CD4-positive, alpha-beta memory T cell (primary cell): ENCODE measurements at regions of chr2 and their contacts with region 1.

Region 1: GRCh38 chr2:105744091-105744908 is 412 bp upstream of the NCK2 start:
- DNase-seq: peak; percentile 63 to 71 (median 69)
- H3K4me3 ChIP-seq: peak overlapping the region; percentile 36 to 38
- H3K4me3 Mint-ChIP-seq: peak overlapping the region; percentile 84 to 91 (median 88)
- H3K27ac ChIP-seq: peak overlapping the region; percentile 65
- H3K27ac Mint-ChIP-seq: peak overlapping the region; percentile 87 to 94 (median 93)
- H3K4me1 ChIP-seq: peaks cover 75% of the 10 kb centered on the region
- H3K4me1 Mint-ChIP-seq: peaks cover 60 to 89% (median 73%) of the 10 kb centered on the region in 4 donors
- H3K27me3 ChIP-seq: no peaks in the 10 kb centered on the region
- H3K27me3 Mint-ChIP-seq: no peaks in the 10 kb centered on the region

Region 2: DNA sequence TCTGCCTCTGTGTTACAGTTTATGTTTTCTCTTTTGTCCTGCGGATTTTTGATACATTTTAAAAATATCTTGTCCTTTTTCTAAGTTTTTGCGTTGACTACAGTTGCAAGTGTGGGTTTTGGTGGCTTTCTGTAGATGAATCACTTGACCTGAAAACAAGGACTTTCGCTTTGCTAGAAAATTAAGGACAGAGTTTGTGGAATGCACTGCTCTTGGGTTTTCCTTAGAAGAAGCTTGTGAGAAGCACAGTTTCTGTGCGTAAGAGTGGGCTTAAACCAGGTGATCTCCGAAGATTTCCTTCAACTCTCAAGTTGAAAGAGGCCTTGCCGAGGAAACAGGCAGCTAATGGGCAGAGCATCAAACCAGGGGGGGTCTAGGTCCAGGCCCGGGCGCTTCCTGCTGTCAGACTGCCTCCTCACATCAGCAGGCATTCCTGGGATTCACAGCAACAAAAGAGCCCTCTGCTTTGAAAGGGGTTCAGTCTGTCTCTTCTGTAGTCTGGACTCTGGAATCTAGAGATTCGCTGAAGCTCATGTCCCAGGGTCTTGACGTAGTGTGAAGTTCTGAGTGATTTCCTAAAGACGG is 17.7 kb after region 1 on chr2:
- CTCF ChIA-PET with region 1: interaction called, 8 read pairs
- POLR2A ChIA-PET with region 1: interaction called, 88 read pairs
- intact Hi-C with region 1: loop called (anchors 2 kb)
- DNase-seq: no peak
- H3K4me3 ChIP-seq: peak overlapping the region; percentile 9 to 39
- H3K4me3 Mint-ChIP-seq: peak overlapping the region; percentile 26 to 87 (median 71)
- H3K27ac ChIP-seq: peak overlapping the region; percentile 53
- H3K27ac Mint-ChIP-seq: peak overlapping the region; percentile 61 to 93 (median 84)
- H3K4me1 ChIP-seq: peaks cover 100% of the 10 kb centered on the region
- H3K4me1 Mint-ChIP-seq: peaks cover 79 to 100% (median 91%) of the 10 kb centered on the region in 4 donors
- H3K27me3 ChIP-seq: no peaks in the 10 kb centered on the region
- H3K27me3 Mint-ChIP-seq: no peaks in the 10 kb centered on the region

Region 3: DNA sequence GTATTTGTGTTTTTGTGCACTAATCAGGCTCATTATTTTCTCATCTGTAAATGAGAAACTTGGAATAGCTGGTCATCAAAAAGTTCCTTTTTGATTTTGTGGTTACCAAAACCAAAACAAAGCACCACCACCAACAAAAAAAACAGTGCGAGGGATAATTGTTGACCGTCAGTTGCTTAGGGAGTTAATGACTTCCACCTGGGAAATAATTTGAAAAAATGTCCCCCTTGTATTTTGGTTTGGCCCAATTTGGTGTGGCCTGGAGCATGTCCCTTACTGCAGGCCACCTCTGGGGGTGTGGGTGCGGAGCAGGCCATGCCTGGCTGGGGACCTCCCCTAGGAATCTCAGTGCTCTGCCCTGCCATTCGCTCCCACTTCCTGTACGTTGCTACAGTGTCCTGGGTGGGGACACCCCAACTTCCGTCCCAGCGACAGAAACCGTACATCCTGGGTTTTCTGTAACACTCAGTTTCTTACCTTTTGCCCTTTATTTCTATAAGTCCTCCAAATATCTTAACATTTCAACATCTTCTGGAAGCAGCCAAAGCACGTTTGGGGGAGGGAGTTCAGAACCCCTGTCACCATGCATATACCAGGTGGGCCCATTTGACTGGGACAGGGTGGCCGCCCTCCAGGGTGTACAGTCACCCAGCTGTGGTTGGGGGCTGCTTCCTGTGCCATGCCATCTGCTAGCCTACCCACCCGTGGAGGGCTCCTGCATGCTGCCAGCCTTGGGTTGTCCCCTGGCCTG is 31.7 kb after region 1 on chr2:
- CTCF ChIA-PET with region 1: interaction called, 14 read pairs
- POLR2A ChIA-PET with region 1: interaction called, 82 read pairs
- intact Hi-C with region 1: loop called (anchors 2 kb)
- DNase-seq: peak in 3 of 5 donors; percentile 48 to 66 (median 48)
- H3K4me3 ChIP-seq: peak overlapping the region; percentile 3 to 55
- H3K4me3 Mint-ChIP-seq: peak overlapping the region; percentile 73 to 90 (median 82)
- H3K27ac ChIP-seq: peak overlapping the region; percentile 71
- H3K27ac Mint-ChIP-seq: peak overlapping the region; percentile 91 to 98 (median 97)
- H3K4me1 ChIP-seq: peaks cover 100% of the 10 kb centered on the region
- H3K4me1 Mint-ChIP-seq: peaks cover 76 to 98% (median 91%) of the 10 kb centered on the region in 4 donors
- H3K27me3 ChIP-seq: no peaks in the 10 kb centered on the region
- H3K27me3 Mint-ChIP-seq: no peaks in the 10 kb centered on the region

Region 4: DNA sequence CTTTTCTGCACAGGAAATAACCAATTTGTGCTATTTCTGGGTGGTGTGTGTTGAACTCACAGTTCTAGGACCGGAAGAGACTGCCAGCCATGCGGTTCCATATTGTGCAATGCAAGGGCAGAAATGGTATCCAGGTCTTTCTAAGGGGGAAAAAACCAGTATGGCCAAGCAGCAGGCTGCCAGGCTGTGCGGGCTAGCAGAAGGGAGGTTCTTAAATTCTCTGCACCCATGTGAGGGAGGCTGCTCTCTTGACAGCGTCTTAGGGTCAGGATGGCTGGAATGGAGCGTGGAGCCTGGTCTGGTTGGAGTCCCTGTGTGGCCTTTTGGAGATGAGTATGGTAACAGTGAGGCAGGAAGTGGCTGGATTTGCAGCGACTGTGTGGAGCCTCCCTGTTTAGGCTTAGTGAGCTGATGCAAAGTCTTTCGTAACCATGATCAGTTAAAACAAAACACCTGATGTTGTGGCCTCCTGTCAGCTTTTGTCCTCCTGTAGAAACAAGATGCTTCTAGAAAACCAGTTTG is 53.1 kb after region 1 on chr2:
- CTCF ChIA-PET with region 1: interaction called, 5 read pairs
- POLR2A ChIA-PET with region 1: interaction called, 47 read pairs
- intact Hi-C with region 1: loop called (anchors 2 kb)
- DNase-seq: peak in 4 of 5 donors; percentile 53 to 67 (median 58)
- H3K4me3 ChIP-seq: peak overlapping the region; percentile 1 to 33
- H3K4me3 Mint-ChIP-seq: peak overlapping the region; percentile 74 to 88 (median 82)
- H3K27ac ChIP-seq: peak overlapping the region; percentile 74
- H3K27ac Mint-ChIP-seq: peak overlapping the region; percentile 86 to 98 (median 95)
- H3K4me1 ChIP-seq: peaks cover 99% of the 10 kb centered on the region
- H3K4me1 Mint-ChIP-seq: peaks cover 82 to 95% (median 88%) of the 10 kb centered on the region in 4 donors
- H3K27me3 ChIP-seq: no peaks in the 10 kb centered on the region
- H3K27me3 Mint-ChIP-seq: no peaks in the 10 kb centered on the region

Region 5: GRCh38 chr2:105873721-105874120 is 129.4 kb after region 1 on chr2:
- CTCF ChIA-PET with region 1: no interaction called
- POLR2A ChIA-PET with region 1: no interaction called
- intact Hi-C with region 1: loop called (anchors 5 kb)
- DNase-seq: peak in 2 of 5 donors; percentile 15 to 83
- H3K4me3 ChIP-seq: no peak overlapping the region
- H3K4me3 Mint-ChIP-seq: peak overlapping the region; percentile 55 to 84 (median 70)
- H3K27ac ChIP-seq: peak overlapping the region; percentile 49
- H3K27ac Mint-ChIP-seq: peak overlapping the region; percentile 88 to 94 (median 91)
- H3K4me1 ChIP-seq: peaks cover 98% of the 10 kb centered on the region
- H3K4me1 Mint-ChIP-seq: peaks cover 77 to 100% (median 90%) of the 10 kb centered on the region in 4 donors
- H3K27me3 ChIP-seq: no peaks in the 10 kb centered on the region
- H3K27me3 Mint-ChIP-seq: no peaks in the 10 kb centered on the region

Region 6: GRCh38 chr2:105929516-105929915 is 185.2 kb after region 1 on chr2:
- CTCF ChIA-PET with region 1: interaction called, 5 read pairs
- POLR2A ChIA-PET with region 1: interaction called, 9 read pairs
- intact Hi-C with region 1: loop called (anchors 5 kb)
- DNase-seq: peak; percentile 62 to 72 (median 68)
- H3K4me3 ChIP-seq: no peak overlapping the region
- H3K4me3 Mint-ChIP-seq: peak overlapping the region; percentile 33 to 81 (median 63)
- H3K27ac ChIP-seq: no peak overlapping the region
- H3K27ac Mint-ChIP-seq: peak overlapping the region; percentile 73 to 97 (median 90)
- H3K4me1 ChIP-seq: peaks cover 89% of the 10 kb centered on the region
- H3K4me1 Mint-ChIP-seq: peaks cover 50 to 66% (median 65%) of the 10 kb centered on the region in 4 donors
- H3K27me3 ChIP-seq: no peaks in the 10 kb centered on the region
- H3K27me3 Mint-ChIP-seq: no peaks in the 10 kb centered on the region

Region 7: DNA sequence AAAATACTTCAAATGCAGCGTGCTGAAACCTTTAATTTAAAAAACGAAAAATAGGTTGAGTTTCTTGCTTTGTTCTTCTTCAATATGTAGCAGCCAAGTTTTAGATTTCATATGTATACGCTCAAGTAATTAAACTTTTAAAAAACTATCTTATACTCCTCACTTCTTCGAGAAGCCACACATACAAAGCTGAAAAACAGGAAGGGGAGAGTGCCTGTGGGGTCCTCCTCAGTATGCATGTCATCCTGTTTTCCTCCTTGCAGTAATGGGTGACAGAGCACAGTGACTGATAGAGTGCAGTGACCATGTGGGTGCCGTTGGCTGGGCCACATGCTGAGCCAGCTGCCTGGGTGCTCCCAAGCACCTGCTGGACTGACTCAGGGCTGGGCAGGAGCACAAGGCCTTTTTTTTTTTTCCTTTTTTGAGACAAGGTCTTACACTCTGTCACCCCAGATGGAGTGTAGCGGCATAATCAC is 416.5 kb after region 1 on chr2:
- CTCF ChIA-PET with region 1: no interaction called
- POLR2A ChIA-PET with region 1: interaction called, 23 read pairs
- intact Hi-C with region 1: loop called (anchors 10 kb)
- DNase-seq: peak in 4 of 5 donors; percentile 56 to 70 (median 62)
- H3K4me3 ChIP-seq: peak overlapping the region in 1 of 2 donors; percentile 64
- H3K4me3 Mint-ChIP-seq: peak overlapping the region; percentile 87 to 98 (median 96)
- H3K27ac ChIP-seq: peak overlapping the region; percentile 80
- H3K27ac Mint-ChIP-seq: peak overlapping the region; percentile 91 to 99 (median 98)
- H3K4me1 ChIP-seq: peaks cover 87% of the 10 kb centered on the region
- H3K4me1 Mint-ChIP-seq: peaks cover 63 to 98% (median 79%) of the 10 kb centered on the region in 4 donors
- H3K27me3 ChIP-seq: no peaks in the 10 kb centered on the region
- H3K27me3 Mint-ChIP-seq: no peaks in the 10 kb centered on the region